ENCODE measurements at regions of chr17 and their contacts with region 1.

Region 1: GRCh38 chr17:2282297-2282873 is 21.2 kb downstream of the SMG6 start:
- DNase-seq: peak in 4 of 14 experiments; percentile 10 to 81 (median 76)
- ATAC-seq: peak; percentile 80
- H3K4me3 ChIP-seq: no peak overlapping the region
- H3K4me3 Mint-ChIP-seq: no peak overlapping the region
- H3K27ac ChIP-seq: no peak overlapping the region
- H3K27ac Mint-ChIP-seq: peak overlapping the region; percentile 58
- H3K4me1 ChIP-seq: peaks cover 14% of the 10 kb centered on the region
- H3K4me1 Mint-ChIP-seq: peaks cover 35% of the 10 kb centered on the region
- H3K27me3 ChIP-seq: no peaks in the 10 kb centered on the region
- H3K27me3 Mint-ChIP-seq: no peaks in the 10 kb centered on the region
- CTCF ChIP-seq: peak; percentile 78

Region 2: DNA sequence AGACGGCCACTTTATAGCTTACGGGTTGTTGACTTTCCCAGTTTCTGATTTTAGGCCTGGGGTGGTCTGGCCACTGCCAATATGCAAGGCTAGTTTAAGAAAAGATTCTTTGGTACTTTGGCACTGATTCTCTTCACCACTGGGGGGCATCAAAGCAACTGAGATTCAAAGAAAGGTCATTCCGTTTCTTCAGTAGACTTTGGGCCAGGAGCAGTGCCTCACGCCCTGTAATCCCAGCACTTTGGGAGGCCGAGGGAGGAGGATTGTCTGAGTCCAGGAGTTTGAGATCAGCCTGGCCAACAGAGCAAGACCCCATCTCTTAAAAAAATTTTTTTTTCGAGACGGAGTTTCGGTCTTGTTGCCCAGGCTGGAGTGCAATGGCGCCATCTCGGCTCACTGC is 399.5 kb before region 1 on chr17:
- CTCF ChIA-PET with region 1: no interaction called
- POLR2A ChIA-PET with region 1: no interaction called
- intact Hi-C with region 1: loop called in 1 of 2 experiments (anchors 10 kb)
- DNase-seq: peak in 6 of 14 experiments; percentile 5 to 50 (median 45)
- ATAC-seq: no peak
- H3K4me3 ChIP-seq: no peak overlapping the region
- H3K4me3 Mint-ChIP-seq: no peak overlapping the region
- H3K27ac ChIP-seq: no peak overlapping the region
- H3K27ac Mint-ChIP-seq: no peak overlapping the region
- H3K4me1 ChIP-seq: no peaks in the 10 kb centered on the region
- H3K4me1 Mint-ChIP-seq: no peaks in the 10 kb centered on the region
- H3K27me3 ChIP-seq: no peaks in the 10 kb centered on the region
- H3K27me3 Mint-ChIP-seq: no peaks in the 10 kb centered on the region
- CTCF ChIP-seq: peak; percentile 42

Region 3: DNA sequence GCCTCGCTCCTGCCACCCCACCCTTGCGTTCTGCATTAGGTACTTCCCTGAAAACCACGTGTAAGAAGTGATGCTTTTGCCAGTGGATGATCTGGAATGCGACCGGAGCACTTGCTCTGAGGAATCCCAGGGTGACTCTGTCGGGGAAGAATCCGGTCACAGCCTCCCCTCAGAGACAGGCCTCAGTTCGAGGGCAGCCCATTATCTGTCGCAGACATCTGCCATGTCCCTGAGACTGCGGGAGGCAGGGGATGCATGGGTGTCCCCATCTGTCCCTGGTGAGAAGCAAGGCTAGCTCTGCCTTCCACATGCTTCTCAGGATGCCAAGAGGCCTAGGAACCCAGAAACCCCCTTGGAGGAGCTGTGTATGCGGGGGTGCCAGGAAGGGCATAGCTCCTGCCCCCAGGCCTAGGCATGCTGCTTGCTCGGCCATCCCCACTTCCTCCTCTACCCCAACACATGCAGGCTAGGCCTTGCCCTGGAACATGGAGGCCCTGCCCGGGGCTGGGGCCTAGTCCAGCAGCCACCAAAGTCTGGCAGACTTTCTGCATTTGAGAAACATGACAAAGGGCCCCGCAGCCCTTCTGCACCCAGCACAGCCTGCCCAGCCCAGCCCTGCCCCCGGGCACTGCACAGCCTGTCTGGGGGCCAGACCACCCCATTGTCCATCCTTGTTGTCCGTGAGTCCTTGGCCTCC is 98.0 kb after region 1 on chr17:
- CTCF ChIA-PET with region 1: no interaction called
- POLR2A ChIA-PET with region 1: no interaction called
- intact Hi-C with region 1: no loop called
- DNase-seq: no peak
- ATAC-seq: no peak
- H3K4me3 ChIP-seq: no peak overlapping the region
- H3K4me3 Mint-ChIP-seq: no peak overlapping the region
- H3K27ac ChIP-seq: no peak overlapping the region
- H3K27ac Mint-ChIP-seq: no peak overlapping the region
- H3K4me1 ChIP-seq: peaks cover 11% of the 10 kb centered on the region
- H3K4me1 Mint-ChIP-seq: peaks cover 6% of the 10 kb centered on the region
- H3K27me3 ChIP-seq: no peaks in the 10 kb centered on the region
- H3K27me3 Mint-ChIP-seq: no peaks in the 10 kb centered on the region
- CTCF ChIP-seq: no peak

Measured in CD4-positive, alpha-beta T cell (primary cell).